Activated CD4-positive, alpha-beta T cell treated with anti-CD3 and anti-CD28 coated beads, Interleukin-2, amount 10 ng/mL, durations not matched to agents 24 days and 14 days (primary cell): ENCODE measurements at regions of chr2 and their contacts with region 1.

Region 1: DNA sequence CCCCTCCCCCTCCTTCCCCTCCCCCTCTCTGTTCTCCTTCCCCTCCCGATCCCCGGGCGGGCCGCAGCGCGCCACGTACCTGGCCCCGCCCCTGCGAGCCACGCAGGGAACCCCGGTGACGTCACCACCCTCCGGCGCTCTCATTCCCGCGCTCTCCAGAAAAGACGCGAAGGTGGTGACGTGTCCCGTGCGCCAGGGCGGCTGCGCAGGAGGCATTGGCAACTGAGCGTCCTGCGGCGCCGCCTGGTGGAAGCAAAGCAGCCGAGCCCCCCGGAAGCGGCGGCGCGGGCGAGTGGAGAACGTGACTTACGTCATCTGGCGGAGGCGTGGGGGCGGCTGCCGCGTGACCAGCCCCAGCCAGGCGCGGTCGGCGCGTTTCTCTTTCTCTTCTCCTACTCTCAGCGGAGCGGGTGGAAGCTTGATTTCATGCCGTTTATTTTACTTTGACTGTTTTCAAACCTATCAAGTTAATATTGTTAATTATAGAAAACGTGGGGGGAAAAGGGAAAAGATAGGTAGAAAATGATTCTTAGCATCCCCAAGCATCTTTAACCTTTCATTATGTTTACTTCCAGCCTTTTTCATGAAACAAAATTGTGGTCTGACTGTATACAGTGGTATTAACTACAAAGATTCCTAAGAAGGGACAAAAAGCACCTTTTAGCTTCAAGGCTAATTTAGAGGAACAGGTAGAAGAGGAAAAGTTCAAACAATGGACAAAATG is 48.1 kb downstream of the C2orf42 start:
- DNase-seq: peak; percentile 100
- H3K4me3 Mint-ChIP-seq: peak overlapping the region; percentile 87
- H3K27ac Mint-ChIP-seq: peak overlapping the region; percentile 98
- H3K4me1 Mint-ChIP-seq: peaks cover 59% of the 10 kb centered on the region
- H3K27me3 Mint-ChIP-seq: no peaks in the 10 kb centered on the region

Region 2: DNA sequence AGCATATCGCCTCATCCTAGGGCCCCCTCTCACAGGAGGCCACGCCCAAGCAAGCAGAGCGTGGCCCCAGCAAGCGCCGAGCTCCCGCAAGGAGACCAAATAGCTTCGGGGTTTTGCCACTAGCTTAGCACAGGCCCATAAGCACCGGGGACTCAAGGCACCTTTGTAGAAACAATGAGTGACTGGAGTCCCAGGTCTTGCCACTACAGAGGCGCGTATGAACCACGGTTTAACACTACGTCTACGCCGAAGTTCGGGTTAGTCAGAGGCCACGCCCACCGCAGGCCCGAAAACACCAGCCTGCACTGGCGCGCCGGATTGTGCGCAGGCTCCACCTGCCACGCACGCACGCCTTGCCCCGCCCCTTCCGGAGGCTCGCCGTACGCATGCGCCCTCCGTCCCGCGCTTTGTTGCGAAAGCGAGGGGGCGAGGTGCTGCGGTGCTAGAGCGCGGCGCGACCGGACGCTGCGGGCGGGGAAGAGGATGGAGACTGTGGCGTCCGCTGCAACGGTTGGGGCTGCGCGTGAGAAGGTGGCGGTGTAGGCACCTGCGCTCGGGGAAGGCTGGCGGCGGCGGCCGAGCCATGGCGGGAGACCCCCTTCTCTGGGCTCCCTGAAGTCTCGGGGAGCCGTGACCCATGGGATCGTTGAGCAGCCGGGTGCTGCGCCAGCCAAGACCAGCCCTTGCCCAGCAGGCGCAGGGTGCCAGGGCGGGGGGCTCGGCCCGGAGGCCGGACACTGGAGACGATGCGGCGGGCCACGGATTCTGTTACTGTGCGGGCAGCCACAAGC is 313.3 kb before region 1 on chr2 and contains the start of gene GMCL1:
- intact Hi-C with region 1: loop called (anchors 2 kb)
- DNase-seq: peak; percentile 100
- H3K4me3 Mint-ChIP-seq: peak within 1 kb of the TSS; percentile 95
- H3K27ac Mint-ChIP-seq: peak within 1 kb of the TSS; percentile 97
- H3K4me1 Mint-ChIP-seq: peaks cover 43% of the 10 kb centered on the region
- H3K27me3 Mint-ChIP-seq: no peaks in the 10 kb centered on the region
- total RNA-seq, gene GMCL1: 25.9 and 28.0 TPM in 2 replicates

Region 3: GRCh38 chr2:70069049-70069448 is 73.7 kb before region 1 on chr2:
- intact Hi-C with region 1: loop called (anchors 1 kb)
- DNase-seq: peak; percentile 94
- H3K4me3 Mint-ChIP-seq: peak overlapping the region; percentile 47
- H3K27ac Mint-ChIP-seq: peak overlapping the region; percentile 91
- H3K4me1 Mint-ChIP-seq: peaks cover 43% of the 10 kb centered on the region
- H3K27me3 Mint-ChIP-seq: no peaks in the 10 kb centered on the region

Region 4: GRCh38 chr2:70132244-70133126 is 10.3 kb before region 1 on chr2:
- intact Hi-C with region 1: loop called (anchors 1 kb)
- DNase-seq: peak; percentile 84
- H3K4me3 Mint-ChIP-seq: peak overlapping the region; percentile 91
- H3K27ac Mint-ChIP-seq: peak overlapping the region; percentile 99
- H3K4me1 Mint-ChIP-seq: peaks cover 72% of the 10 kb centered on the region
- H3K27me3 Mint-ChIP-seq: no peaks in the 10 kb centered on the region

Region 5: DNA sequence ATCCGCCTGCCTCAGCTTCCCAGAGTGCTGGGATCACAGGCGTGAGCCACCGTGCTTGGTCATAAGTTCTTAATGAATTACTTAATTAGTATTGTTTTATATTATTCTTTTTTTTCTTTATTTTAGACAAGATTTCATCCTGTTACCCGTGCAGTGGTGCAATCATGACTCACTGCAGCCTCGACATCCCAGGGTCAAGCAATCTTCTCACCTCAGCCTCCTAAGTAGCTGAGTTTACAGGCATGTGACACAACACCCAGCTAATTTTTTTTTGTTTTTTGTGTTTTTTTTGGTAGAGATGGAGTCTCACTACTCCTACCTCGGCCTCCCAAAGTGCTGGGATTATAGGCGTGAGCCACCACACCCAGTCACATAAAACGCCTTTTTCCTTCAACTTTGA is 30.8 kb after region 1 on chr2:
- intact Hi-C with region 1: no loop called
- DNase-seq: no peak
- H3K4me3 Mint-ChIP-seq: no peak overlapping the region
- H3K27ac Mint-ChIP-seq: no peak overlapping the region
- H3K4me1 Mint-ChIP-seq: no peaks in the 10 kb centered on the region
- H3K27me3 Mint-ChIP-seq: no peaks in the 10 kb centered on the region

Region 6: DNA sequence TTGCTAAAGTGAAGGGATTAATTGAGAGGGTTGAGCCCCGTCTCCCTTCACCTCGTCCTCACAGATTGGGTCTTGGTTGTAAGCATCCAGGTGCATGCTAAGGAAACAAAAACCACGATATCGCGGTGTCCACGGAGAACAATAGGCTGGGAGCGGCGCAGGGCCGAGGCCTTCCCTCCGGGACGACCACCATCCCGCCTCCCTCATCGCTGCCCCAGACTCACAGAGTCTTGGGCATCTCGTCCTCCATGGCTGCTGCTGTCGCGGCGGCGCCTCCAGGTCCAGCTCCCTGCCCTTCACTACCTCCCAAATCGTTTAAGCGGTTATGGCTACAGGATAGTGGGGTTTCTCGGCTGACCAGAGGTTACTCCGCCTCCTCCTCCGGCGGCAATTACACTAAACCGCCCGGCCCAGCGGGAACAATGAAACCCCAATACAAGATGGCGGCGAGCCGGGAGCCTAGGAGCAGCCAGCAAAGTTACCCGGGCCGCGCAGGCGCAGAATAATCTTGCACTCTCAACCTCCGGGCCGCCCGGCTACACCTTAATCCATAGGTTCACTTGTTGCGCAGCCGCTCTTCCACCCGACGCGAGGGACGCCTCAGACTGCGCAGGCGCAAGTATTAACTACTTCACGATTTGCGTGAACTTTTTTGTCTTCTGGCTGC is 105.6 kb after region 1 on chr2 and contains the start of gene TIA1:
- intact Hi-C with region 1: loop called (anchors 2 kb)
- DNase-seq: peak; percentile 99
- H3K4me3 Mint-ChIP-seq: peak within 1 kb of the TSS; percentile 96
- H3K27ac Mint-ChIP-seq: peak within 1 kb of the TSS; percentile 99
- H3K4me1 Mint-ChIP-seq: peaks cover 26% of the 10 kb centered on the region
- H3K27me3 Mint-ChIP-seq: peaks cover 3% of the 10 kb centered on the region
- total RNA-seq, gene TIA1: 104 and 105 TPM in 2 replicates